OCI-LY7 (cell line): ENCODE measurements at regions of chr14 and their contacts with region 1.

Region 1: GRCh38 chr14:20855652-20856291 is 35.4 kb upstream of the RNASE3 start:
- DNase-seq: peak; percentile 61
- H3K4me3 ChIP-seq: no peak overlapping the region
- H3K27ac ChIP-seq: no peak overlapping the region
- H3K4me1 ChIP-seq: no peaks in the 10 kb centered on the region
- CTCF ChIP-seq: peak; percentile 85

Region 2: GRCh38 chr14:20624495-20625070 is 231.2 kb before region 1 on chr14:
- CTCF ChIA-PET with region 1: no interaction called
- POLR2A ChIA-PET with region 1: no interaction called
- intact Hi-C with region 1: no loop called
- DNase-seq: no peak
- H3K4me3 ChIP-seq: no peak overlapping the region
- H3K27ac ChIP-seq: no peak overlapping the region
- H3K4me1 ChIP-seq: no peaks in the 10 kb centered on the region
- CTCF ChIP-seq: no peak

Region 3: GRCh38 chr14:20697273-20698017 is 158.3 kb before region 1 on chr14:
- CTCF ChIA-PET with region 1: no interaction called
- POLR2A ChIA-PET with region 1: no interaction called
- intact Hi-C with region 1: loop called (anchors 1 kb)
- DNase-seq: peak; percentile 75
- H3K4me3 ChIP-seq: peak overlapping the region; percentile 4
- H3K27ac ChIP-seq: no peak overlapping the region
- H3K4me1 ChIP-seq: no peaks in the 10 kb centered on the region
- CTCF ChIP-seq: peak; percentile 91

Region 4: DNA sequence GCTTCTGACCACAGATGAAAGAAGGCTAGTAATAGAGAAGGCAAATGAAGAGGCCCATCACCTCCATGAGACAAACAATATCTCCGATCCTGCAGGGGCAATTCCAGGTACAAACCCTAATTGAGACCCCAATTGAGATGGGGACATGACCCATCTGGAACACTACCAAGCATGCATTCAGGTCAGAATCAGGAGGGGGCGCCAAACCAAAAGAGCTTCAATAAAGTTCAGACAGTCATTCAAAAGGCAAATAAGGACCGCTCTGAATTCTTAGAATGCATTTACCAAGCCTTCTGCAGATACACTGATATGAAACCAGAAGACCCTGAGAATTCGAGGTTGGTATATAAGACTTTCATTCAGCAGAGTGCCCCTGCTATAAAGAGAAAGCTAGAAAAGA is 97.8 kb before region 1 on chr14:
- CTCF ChIA-PET with region 1: no interaction called
- POLR2A ChIA-PET with region 1: no interaction called
- intact Hi-C with region 1: loop called (anchors 1 kb)
- DNase-seq: peak; percentile 20
- H3K4me3 ChIP-seq: no peak overlapping the region
- H3K27ac ChIP-seq: no peak overlapping the region
- H3K4me1 ChIP-seq: no peaks in the 10 kb centered on the region
- CTCF ChIP-seq: peak; percentile 78

Region 5: DNA sequence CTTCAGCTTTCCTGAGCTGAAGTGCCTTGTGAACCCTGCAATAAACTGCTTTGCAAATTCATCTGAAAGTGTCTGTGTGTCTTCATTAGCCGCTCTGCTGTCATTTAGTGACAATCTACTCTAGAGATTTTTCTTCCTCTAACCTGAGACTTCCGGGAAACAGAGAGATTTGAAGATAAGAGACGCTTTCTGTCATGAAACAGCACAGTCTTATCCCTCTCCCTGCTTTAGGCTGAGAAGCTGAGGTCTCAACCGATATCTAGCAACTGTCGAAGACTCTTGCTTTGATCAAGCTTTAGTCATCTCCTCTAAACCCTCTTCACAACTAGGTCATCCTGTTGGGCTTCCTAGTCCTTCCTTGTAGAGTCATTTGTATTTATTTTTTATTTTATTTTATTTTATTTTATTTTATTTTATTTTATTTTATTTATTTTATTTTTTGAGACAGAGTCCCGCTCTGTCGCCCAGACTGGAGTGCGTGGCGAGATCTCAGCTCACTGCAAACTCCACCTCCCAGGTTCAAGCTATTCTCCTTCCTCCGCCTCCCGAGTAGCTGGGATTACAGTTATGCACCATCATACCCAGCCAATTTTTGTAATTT is 100.7 kb after region 1 on chr14:
- CTCF ChIA-PET with region 1: no interaction called
- POLR2A ChIA-PET with region 1: interaction called, 3 read pairs
- intact Hi-C with region 1: loop called (anchors 1 kb)
- DNase-seq: no peak
- H3K4me3 ChIP-seq: no peak overlapping the region
- H3K27ac ChIP-seq: no peak overlapping the region
- H3K4me1 ChIP-seq: peaks cover 8% of the 10 kb centered on the region
- CTCF ChIP-seq: no peak

Region 6: GRCh38 chr14:20970983-20971704 is 115.4 kb after region 1 on chr14:
- CTCF ChIA-PET with region 1: interaction called, 7 read pairs
- POLR2A ChIA-PET with region 1: interaction called, 3 read pairs
- intact Hi-C with region 1: loop called (anchors 1 kb)
- DNase-seq: peak; percentile 87
- H3K4me3 ChIP-seq: peak overlapping the region; percentile 75
- H3K27ac ChIP-seq: no peak overlapping the region
- H3K4me1 ChIP-seq: peaks cover 13% of the 10 kb centered on the region
- CTCF ChIP-seq: peak; percentile 91

Region 7: GRCh38 chr14:21103710-21104447 is 248.1 kb after region 1 on chr14:
- CTCF ChIA-PET with region 1: no interaction called
- POLR2A ChIA-PET with region 1: no interaction called
- intact Hi-C with region 1: loop called (anchors 1 kb)
- DNase-seq: peak; percentile 97
- H3K4me3 ChIP-seq: peak overlapping the region; percentile 85
- H3K27ac ChIP-seq: peak overlapping the region; percentile 59
- H3K4me1 ChIP-seq: peaks cover 45% of the 10 kb centered on the region
- CTCF ChIP-seq: 0 out of 2 replicates have a peak, but pooled peaks have one; percentile 76